Dendritic cell treated with granulocyte-macrophage colony-stimulating factor and Interleukin-4, amounts not matched to agents 40 ng/mL and 50 ng/mL, for 4 days (primary cell): ENCODE measurements at regions of chr5 and their contacts with region 1.

Region 1: DNA sequence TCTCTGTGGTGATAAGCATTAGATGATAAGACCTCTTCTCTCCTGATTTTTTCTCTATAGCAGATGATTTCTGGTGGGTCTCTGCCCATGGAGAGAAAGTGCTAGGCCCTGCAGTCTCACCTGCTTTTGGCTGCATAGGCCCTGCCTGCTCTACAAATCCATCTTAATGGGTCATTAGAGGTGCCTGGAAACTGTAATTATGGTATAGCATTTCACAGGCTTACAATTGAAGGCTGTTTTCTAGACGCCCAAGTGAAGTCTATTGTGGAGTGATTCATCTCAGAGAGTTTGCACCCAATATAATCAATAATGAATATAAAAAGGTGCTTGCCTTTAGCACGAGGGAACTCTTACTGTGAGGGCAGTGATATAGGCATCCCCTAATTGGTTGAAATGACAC is 33.8 kb downstream of the NEUROG1 start:
- H3K4me3 Mint-ChIP-seq: no peak overlapping the region
- H3K27ac Mint-ChIP-seq: no peak overlapping the region
- H3K4me1 Mint-ChIP-seq: no peaks in the 10 kb centered on the region
- H3K27me3 Mint-ChIP-seq: peaks cover 60% of the 10 kb centered on the region

Region 2: GRCh38 chr5:135535820-135536801 is 34.1 kb after region 1 on chr5 and contains the start of gene NEUROG1:
- intact Hi-C with region 1: loop called (anchors 5 kb)
- H3K4me3 Mint-ChIP-seq: peak within 1 kb of the TSS; percentile 44
- H3K27ac Mint-ChIP-seq: no peak within 1 kb of the TSS
- H3K4me1 Mint-ChIP-seq: peaks cover 25% of the 10 kb centered on the region
- H3K27me3 Mint-ChIP-seq: peaks cover 96% of the 10 kb centered on the region